ENCODE measurements at regions of chr12 and their contacts with region 1.

Region 1: DNA sequence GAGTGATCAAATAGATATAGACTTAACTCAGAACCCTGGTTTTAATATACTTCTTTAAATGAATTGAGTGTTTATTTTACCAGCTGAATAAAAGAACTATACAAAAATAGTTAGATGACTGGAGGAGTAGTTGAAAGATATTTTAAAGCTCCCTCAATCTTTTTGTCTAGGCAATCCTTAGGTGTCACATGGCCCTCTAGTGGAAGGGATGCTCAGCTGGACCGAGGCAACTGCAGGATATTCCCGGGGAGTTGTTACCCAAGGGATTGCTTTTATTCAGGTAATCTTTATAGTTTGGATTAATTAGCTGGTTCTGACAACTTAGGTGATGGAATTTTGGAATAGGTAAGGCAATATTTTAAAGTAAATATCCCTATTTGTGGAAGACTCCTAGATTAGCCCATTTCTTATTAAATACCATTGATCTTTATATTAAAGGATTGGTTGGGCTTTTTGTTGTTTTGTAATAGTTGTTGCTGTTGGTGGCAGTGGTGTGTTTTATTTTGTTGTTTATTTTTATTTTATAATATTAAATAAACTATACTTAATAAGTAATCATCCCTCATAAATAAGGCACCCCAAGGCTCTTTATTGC is 57.1 kb downstream of the ZDHHC17 start:
- DNase-seq: no peak
- ATAC-seq: no peak
- H3K4me3 ChIP-seq: no peak overlapping the region
- H3K4me3 Mint-ChIP-seq: no peak overlapping the region
- H3K27ac ChIP-seq: no peak overlapping the region
- H3K27ac Mint-ChIP-seq: peak overlapping the region in 1 of 9 donors; percentile 16
- H3K4me1 ChIP-seq: no peaks in the 10 kb centered on the region
- H3K4me1 Mint-ChIP-seq: no peaks in the 10 kb centered on the region
- H3K27me3 ChIP-seq: no peaks in the 10 kb centered on the region
- H3K27me3 Mint-ChIP-seq: no peaks in the 10 kb centered on the region

Region 2: DNA sequence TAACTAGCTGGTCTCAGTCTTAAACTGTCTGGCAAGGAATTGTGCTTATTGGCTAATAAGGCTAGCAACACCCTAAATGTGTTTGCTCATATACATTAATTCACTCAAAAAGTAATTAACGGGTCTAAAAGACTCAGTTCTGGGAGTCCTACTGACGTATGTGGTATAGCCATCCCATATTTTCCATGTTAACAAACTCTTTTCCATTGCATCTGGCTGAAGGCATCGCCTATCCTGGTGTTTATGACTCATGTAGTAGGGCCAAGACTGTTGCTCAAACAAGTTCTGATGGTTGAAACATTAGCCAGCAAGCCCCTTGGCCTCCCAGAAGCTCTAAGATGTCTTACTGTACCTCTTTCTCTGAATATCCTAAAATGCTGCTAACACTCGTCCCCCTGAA is 887.9 kb before region 1 on chr12:
- CTCF ChIA-PET with region 1: no interaction called
- POLR2A ChIA-PET with region 1: no interaction called
- intact Hi-C with region 1: no loop called
- DNase-seq: no peak
- ATAC-seq: no peak
- H3K4me3 ChIP-seq: no peak overlapping the region
- H3K4me3 Mint-ChIP-seq: no peak overlapping the region
- H3K27ac ChIP-seq: no peak overlapping the region
- H3K27ac Mint-ChIP-seq: no peak overlapping the region
- H3K4me1 ChIP-seq: peaks cover 0 to 14% of the 10 kb centered on the region in 2 donors
- H3K4me1 Mint-ChIP-seq: peaks cover 0 to 26% (median 9%) of the 10 kb centered on the region in 7 donors
- H3K27me3 ChIP-seq: no peaks in the 10 kb centered on the region
- H3K27me3 Mint-ChIP-seq: peaks cover 0 to 16% (median 2%) of the 10 kb centered on the region in 5 donors

Region 3: GRCh38 chr12:76591476-76591875 is 229.5 kb before region 1 on chr12:
- CTCF ChIA-PET with region 1: no interaction called
- POLR2A ChIA-PET with region 1: no interaction called
- intact Hi-C with region 1: no loop called
- DNase-seq: no peak
- ATAC-seq: no peak
- H3K4me3 ChIP-seq: no peak overlapping the region
- H3K4me3 Mint-ChIP-seq: no peak overlapping the region
- H3K27ac ChIP-seq: no peak overlapping the region
- H3K27ac Mint-ChIP-seq: no peak overlapping the region
- H3K4me1 ChIP-seq: no peaks in the 10 kb centered on the region
- H3K4me1 Mint-ChIP-seq: peaks cover 0 to 6% (median 0%) of the 10 kb centered on the region in 7 donors
- H3K27me3 ChIP-seq: no peaks in the 10 kb centered on the region
- H3K27me3 Mint-ChIP-seq: peaks cover 0 to 3% (median 0%) of the 10 kb centered on the region in 5 donors

Region 4: DNA sequence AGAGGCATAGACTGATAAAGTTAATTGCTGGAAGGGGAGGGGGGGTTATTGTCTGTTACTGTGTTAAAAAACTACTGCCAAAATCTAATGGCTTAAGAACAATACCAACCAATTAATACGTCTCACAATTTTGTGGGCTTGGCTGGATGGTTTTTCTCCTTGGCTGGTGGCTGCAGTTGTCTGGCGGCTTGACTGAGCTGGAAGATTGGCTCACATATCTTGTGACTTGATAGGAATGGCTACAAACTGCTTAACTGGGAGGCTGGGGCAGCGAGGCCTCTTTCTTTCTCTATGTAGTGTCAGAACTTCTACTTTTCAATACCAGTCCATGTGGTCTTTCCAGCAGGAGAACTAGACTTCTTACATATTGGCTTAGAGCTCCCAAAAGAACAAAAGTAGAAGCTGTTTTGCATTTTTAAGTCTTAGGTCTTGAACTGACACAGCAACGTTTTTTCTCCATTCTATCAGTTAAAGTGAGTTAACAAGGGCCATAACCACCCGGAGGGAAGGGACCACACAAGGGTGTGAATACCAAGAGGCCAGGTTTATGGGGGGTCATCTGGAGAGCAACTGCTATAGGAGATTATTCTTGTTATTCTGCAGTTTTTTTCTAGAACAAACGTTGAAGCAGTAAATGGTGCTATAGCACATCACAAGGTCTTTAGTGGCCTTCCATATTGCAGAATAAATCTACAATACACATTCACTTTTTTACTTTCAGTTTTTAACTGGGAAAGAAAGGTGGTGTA is 10.1 kb before region 1 on chr12:
- CTCF ChIA-PET with region 1: no interaction called
- POLR2A ChIA-PET with region 1: no interaction called
- intact Hi-C with region 1: loop called in 1 of 2 experiments (anchors 2 kb)
- DNase-seq: no peak
- ATAC-seq: no peak
- H3K4me3 ChIP-seq: no peak overlapping the region
- H3K4me3 Mint-ChIP-seq: no peak overlapping the region
- H3K27ac ChIP-seq: no peak overlapping the region
- H3K27ac Mint-ChIP-seq: peak overlapping the region in 2 of 9 donors; percentile 9 to 22
- H3K4me1 ChIP-seq: no peaks in the 10 kb centered on the region
- H3K4me1 Mint-ChIP-seq: peaks cover 0 to 8% (median 0%) of the 10 kb centered on the region in 7 donors
- H3K27me3 ChIP-seq: no peaks in the 10 kb centered on the region
- H3K27me3 Mint-ChIP-seq: no peaks in the 10 kb centered on the region

Measured in naive thymus-derived CD4-positive, alpha-beta T cell (primary cell).